Right cardiac atrium (tissue), 5 donors: ENCODE measurements at regions of chr22 and their contacts with region 1.

Region 1: GRCh38 chr22:36194971-36195370 is 6.6 kb downstream of the APOL4 start:
- DNase-seq: peak; percentile 55 to 76 (median 75)
- ATAC-seq: peak; percentile 49 to 58
- H3K4me3 ChIP-seq: no peak overlapping the region
- H3K27ac ChIP-seq: no peak overlapping the region
- H3K4me1 ChIP-seq: peaks cover 13% of the 10 kb centered on the region
- H3K27me3 ChIP-seq: no peaks in the 10 kb centered on the region

Region 2: DNA sequence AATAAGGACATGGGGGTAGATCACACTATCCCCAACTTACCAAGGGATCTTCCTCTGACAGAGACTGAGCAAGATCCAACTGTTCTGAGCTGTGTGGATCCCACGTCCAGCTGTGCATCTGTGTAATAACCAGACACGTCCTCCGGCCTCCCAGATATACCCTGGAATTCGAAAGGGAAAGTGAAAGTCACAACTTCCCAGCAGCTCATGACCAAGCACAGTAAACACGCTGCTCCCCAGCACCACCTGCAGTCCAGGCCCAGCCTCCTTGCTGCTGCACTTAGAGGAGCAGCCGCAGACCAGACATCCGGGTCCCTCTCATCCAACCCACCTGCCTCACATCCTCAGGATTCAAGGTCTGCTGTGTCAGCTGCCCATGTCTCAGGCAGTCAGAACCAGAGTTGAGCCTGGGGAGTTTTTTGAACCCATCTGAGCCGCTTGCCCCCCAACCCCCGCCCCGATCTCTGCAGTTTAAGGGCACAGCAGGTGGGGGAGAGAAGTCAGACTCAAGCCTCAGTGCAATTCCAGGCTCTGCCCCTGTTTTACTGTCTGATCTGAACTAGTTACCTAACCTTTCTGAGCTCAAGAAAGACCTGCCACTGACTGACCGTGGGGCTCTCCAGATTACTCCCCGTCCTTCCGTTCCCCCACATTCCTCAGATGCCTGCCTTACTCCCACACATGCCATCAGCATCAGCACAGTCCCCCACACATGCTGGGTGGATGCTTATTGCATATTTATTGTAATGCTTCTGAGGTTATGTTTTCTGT is 44.6 kb after region 1 on chr22 and contains the start of gene APOL2:
- intact Hi-C with region 1: loop called in 1 of 4 experiments (anchors 5 kb)
- DNase-seq: peak; percentile 90 to 96 (median 92)
- ATAC-seq: peak; percentile 97 to 98
- H3K4me3 ChIP-seq: peak within 1 kb of the TSS; percentile 53
- H3K27ac ChIP-seq: peak within 1 kb of the TSS; percentile 88
- H3K4me1 ChIP-seq: peaks cover 24% of the 10 kb centered on the region
- H3K27me3 ChIP-seq: no peaks in the 10 kb centered on the region
- total RNA-seq, gene APOL2: 39.9 to 54.8 (median 42.9) TPM

Region 3: DNA sequence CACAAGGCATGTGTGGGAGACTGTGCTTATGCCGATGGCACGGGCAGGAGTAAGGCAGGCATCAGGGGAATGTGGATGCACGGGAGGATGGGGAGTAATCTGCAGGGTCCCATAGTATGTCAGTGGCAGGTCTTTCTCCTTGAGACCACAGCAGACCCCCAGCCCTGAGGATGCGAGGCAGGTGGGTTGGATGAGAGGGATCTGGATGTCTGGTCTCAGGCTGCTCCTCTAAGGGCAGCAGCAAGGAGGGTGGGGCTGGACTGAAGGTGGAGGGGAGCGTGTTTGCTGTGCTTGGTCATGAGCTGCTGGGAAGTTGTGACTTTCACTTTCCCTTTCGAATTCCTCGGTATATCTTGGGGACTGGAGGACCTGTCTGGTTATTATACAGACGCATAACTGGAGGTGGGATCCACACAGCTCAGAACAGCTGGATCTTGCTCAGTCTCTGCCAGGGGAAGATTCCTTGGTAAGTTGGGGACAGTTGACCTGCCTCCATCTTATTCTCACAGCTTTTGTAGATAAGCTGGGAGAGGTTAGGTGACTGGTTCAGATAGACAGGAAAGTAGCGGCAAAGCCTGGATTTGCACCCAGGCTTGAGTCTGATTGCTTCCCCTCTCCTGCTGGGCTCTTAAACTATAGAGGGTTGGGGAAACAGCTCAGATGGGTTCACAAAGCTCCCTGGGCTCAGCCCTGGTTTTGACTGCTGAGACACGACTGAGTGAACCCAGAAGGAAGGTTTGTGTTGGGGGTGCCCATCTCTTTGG is 58.0 kb after region 1 on chr22 and contains the start of gene APOL1:
- intact Hi-C with region 1: no loop called
- DNase-seq: peak in 1 of 3 donors; percentile 65
- ATAC-seq: peak; percentile 67 to 68
- H3K4me3 ChIP-seq: peak within 1 kb of the TSS; percentile 49
- H3K27ac ChIP-seq: peak within 1 kb of the TSS; percentile 73
- H3K4me1 ChIP-seq: peaks cover 13% of the 10 kb centered on the region
- H3K27me3 ChIP-seq: no peaks in the 10 kb centered on the region
- total RNA-seq, gene APOL1: 14.0 to 29.8 (median 16.9) TPM

Region 4: DNA sequence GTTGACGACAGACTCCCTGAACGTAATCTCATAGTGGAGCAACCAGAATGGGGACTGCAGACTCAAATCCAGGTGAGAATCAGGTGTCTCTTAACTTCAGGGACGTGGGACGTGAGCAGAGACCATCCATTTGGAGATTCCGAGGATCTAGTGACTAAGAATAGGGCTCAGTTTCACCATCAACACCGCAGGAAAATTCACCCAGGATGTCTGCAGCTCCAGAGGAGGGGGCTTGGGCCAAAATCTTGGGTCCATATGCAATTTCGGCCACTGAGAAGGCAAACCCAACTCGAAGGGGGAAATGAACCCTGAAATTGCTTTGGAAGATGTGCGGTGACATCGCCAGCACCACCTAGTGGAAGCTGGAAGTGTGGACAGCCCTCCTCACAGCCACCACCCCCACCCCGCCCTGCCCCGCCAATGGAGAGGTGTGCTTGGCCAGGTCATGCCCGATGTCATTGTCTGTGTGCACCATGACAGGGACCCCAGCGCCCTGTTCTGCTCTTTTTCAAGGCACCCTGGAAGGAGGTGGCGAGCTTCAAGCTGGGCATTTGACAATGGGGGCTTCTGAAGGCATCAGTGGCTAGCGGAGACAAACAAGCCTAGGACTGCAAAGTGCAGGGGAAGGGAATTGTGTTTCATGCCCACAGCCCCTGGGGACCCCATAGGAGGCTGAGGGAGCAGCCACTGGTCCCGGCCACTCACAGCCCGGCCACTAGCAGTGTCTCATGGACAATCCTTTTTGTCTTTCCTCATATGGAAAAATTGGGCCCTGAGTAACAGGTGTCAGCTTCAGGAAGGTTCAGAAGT is 82.7 kb after region 1 on chr22:
- intact Hi-C with region 1: loop called in 2 of 4 experiments (anchors 5 to 10 kb)
- DNase-seq: peak; percentile 60 to 82 (median 81)
- ATAC-seq: peak; percentile 60 to 70
- H3K4me3 ChIP-seq: no peak overlapping the region
- H3K27ac ChIP-seq: no peak overlapping the region
- H3K4me1 ChIP-seq: no peaks in the 10 kb centered on the region
- H3K27me3 ChIP-seq: no peaks in the 10 kb centered on the region

Region 5: GRCh38 chr22:36286471-36287224 is 91.7 kb after region 1 on chr22:
- intact Hi-C with region 1: loop called in 1 of 4 experiments (anchors 5 kb)
- DNase-seq: peak; percentile 74 to 93 (median 91)
- ATAC-seq: peak; percentile 73 to 86
- H3K4me3 ChIP-seq: no peak overlapping the region
- H3K27ac ChIP-seq: peak overlapping the region; percentile 2
- H3K4me1 ChIP-seq: no peaks in the 10 kb centered on the region
- H3K27me3 ChIP-seq: no peaks in the 10 kb centered on the region